GM12878 (cell line): ENCODE measurements at regions of chr3 and their contacts with region 1.

Region 1: GRCh38 chr3:15845475-15845874 is 47.7 kb upstream of the ANKRD28 start:
- DNase-seq: no peak
- ATAC-seq: peak; percentile 90
- H3K4me3 ChIP-seq: no peak overlapping the region
- H3K27ac ChIP-seq: no peak overlapping the region
- H3K4me1 ChIP-seq: peaks cover 4% of the 10 kb centered on the region; the same call in 1 of the 2 replicates
- H3K27me3 ChIP-seq: no peaks in the 10 kb centered on the region
- CTCF ChIP-seq: no peak
- EP300 ChIP-seq: no peak
- POLR2A ChIP-seq: no peak
- RAD21 ChIP-seq: no peak

Region 2: GRCh38 chr3:15831930-15832329 is 13.5 kb before region 1 on chr3:
- CTCF ChIA-PET with region 1: interaction called, 3 read pairs
- POLR2A ChIA-PET with region 1: interaction called, 5 read pairs
- RAD21 ChIA-PET with region 1: no interaction called
- SMC1A ChIA-PET with region 1: interaction called, 18 read pairs
- in situ Hi-C with region 1: no loop called
- intact Hi-C with region 1: no loop called
- DNase-seq: no peak
- ATAC-seq: no peak
- H3K4me3 ChIP-seq: no peak overlapping the region
- H3K27ac ChIP-seq: no peak overlapping the region
- H3K4me1 ChIP-seq: no peaks in the 10 kb centered on the region
- H3K27me3 ChIP-seq: no peaks in the 10 kb centered on the region
- CTCF ChIP-seq: no peak
- EP300 ChIP-seq: no peak
- POLR2A ChIP-seq: no peak
- RAD21 ChIP-seq: no peak

Region 3: GRCh38 chr3:15859507-15860013 is 14.1 kb after region 1 on chr3:
- CTCF ChIA-PET with region 1: interaction called, 7 read pairs
- POLR2A ChIA-PET with region 1: interaction called, 7 read pairs
- RAD21 ChIA-PET with region 1: interaction called, 4 read pairs
- SMC1A ChIA-PET with region 1: interaction called, 22 read pairs
- in situ Hi-C with region 1: no loop called
- intact Hi-C with region 1: no loop called
- DNase-seq: no peak
- ATAC-seq: peak; percentile 87
- H3K4me3 ChIP-seq: peak overlapping the region; percentile 86
- H3K27ac ChIP-seq: peak overlapping the region; percentile 78
- H3K4me1 ChIP-seq: 0 out of 2 replicates have a peak, but pooled peaks cover 3% of the 10 kb centered on the region
- H3K27me3 ChIP-seq: no peaks in the 10 kb centered on the region
- CTCF ChIP-seq: no peak
- EP300 ChIP-seq: no peak
- POLR2A ChIP-seq: peak; percentile 64
- RAD21 ChIP-seq: no peak

Region 4: DNA sequence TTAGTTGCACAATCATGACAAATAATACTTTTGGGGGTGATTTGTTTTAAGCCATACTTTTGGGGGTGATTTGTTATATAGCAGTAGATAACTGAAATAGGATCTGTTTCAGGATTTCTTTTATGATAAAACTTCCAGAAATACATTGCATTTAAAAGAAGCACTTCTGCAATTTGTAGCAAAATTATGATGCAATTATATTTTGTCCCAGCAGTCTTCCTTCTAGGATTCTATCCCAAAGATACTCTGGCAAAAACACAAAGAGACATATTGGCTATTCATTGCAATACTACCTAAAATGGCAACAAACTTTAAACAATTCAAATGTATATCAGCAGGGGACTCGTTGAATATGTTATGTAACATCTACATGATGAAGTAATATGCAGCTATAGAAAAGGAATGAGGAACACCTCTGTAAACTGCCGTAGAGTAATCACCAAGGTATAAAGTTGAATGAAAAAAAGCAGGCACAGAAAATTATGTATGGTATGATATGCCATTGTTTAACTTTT is 31.3 kb after region 1 on chr3:
- CTCF ChIA-PET with region 1: no interaction called
- POLR2A ChIA-PET with region 1: no interaction called
- RAD21 ChIA-PET with region 1: no interaction called
- SMC1A ChIA-PET with region 1: no interaction called
- in situ Hi-C with region 1: no loop called
- intact Hi-C with region 1: no loop called
- DNase-seq: no peak
- ATAC-seq: no peak
- H3K4me3 ChIP-seq: no peak overlapping the region
- H3K27ac ChIP-seq: no peak overlapping the region
- H3K4me1 ChIP-seq: no peaks in the 10 kb centered on the region
- H3K27me3 ChIP-seq: no peaks in the 10 kb centered on the region
- CTCF ChIP-seq: no peak
- EP300 ChIP-seq: no peak
- POLR2A ChIP-seq: no peak
- RAD21 ChIP-seq: no peak